Activated CD4-positive, alpha-beta memory T cell treated with anti-CD3 and anti-CD28 coated beads for 36 hours (primary cell): ENCODE measurements at regions of chr6 and their contacts with region 1.

Region 1: DNA sequence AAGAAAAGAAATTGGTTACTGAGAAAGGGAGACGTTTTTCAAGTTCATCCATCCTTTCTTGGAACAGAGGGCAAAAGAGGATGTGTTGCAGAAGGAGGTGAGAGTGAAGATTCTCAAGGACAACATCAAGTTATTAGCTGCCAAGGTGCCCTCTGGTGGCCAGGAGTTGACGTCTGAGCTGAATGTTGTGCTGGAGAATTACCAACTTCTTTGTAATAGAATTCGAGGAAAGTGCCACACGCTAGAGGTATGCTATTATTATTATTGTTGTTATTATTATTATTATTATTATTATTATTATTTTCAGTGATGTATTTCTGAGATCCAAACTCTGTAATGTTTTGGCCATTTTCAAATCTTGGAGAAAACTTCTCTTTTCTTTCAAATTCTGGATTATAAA is 197.0 kb downstream of the UTRN start:
- DNase-seq: peak; percentile 83
- H3K4me3 Mint-ChIP-seq: no peak overlapping the region
- H3K27ac Mint-ChIP-seq: no peak overlapping the region
- H3K4me1 Mint-ChIP-seq: peaks cover 10% of the 10 kb centered on the region
- H3K27me3 Mint-ChIP-seq: no peaks in the 10 kb centered on the region

Region 2: DNA sequence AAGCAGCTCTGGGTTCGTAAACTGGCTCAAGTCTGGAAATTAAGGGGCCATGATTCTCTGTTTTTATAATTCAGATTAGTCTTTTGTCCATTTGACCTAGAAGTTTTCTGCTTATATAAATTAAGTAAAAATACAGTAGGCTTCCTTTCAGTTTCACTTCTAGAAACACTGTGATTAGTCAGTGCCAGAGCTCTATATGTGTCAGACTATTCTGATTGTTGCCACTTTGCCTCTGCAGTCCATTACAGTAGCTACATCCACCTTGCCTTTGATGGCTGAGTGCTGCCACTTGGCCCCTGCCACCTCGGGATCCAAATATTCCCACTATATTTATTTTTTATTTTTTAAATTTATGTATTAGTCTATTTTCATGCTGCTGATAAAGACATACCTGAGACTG is 609.9 kb before region 1 on chr6:
- CTCF ChIA-PET with region 1: no interaction called
- POLR2A ChIA-PET with region 1: no interaction called
- intact Hi-C with region 1: no loop called
- DNase-seq: no peak
- H3K4me3 Mint-ChIP-seq: no peak overlapping the region
- H3K27ac Mint-ChIP-seq: no peak overlapping the region
- H3K4me1 Mint-ChIP-seq: peaks cover 11% of the 10 kb centered on the region
- H3K27me3 Mint-ChIP-seq: no peaks in the 10 kb centered on the region

Region 3: GRCh38 chr6:144262470-144263369 is 219.4 kb before region 1 on chr6:
- CTCF ChIA-PET with region 1: interaction called, 15 read pairs
- POLR2A ChIA-PET with region 1: no interaction called
- intact Hi-C with region 1: loop called (anchors 2 kb)
- DNase-seq: peak; percentile 32
- H3K4me3 Mint-ChIP-seq: no peak overlapping the region
- H3K27ac Mint-ChIP-seq: no peak overlapping the region
- H3K4me1 Mint-ChIP-seq: no peaks in the 10 kb centered on the region
- H3K27me3 Mint-ChIP-seq: no peaks in the 10 kb centered on the region

Region 4: GRCh38 chr6:144460327-144461095 is 21.6 kb before region 1 on chr6:
- CTCF ChIA-PET with region 1: interaction called, 15 read pairs
- POLR2A ChIA-PET with region 1: no interaction called
- intact Hi-C with region 1: no loop called
- DNase-seq: peak; percentile 17
- H3K4me3 Mint-ChIP-seq: peak overlapping the region; percentile 14
- H3K27ac Mint-ChIP-seq: peak overlapping the region; percentile 61
- H3K4me1 Mint-ChIP-seq: peaks cover 21% of the 10 kb centered on the region
- H3K27me3 Mint-ChIP-seq: no peaks in the 10 kb centered on the region

Region 5: GRCh38 chr6:144469144-144469575 is 13.0 kb before region 1 on chr6:
- CTCF ChIA-PET with region 1: interaction called, 25 read pairs
- POLR2A ChIA-PET with region 1: no interaction called
- intact Hi-C with region 1: no loop called
- DNase-seq: peak; percentile 46
- H3K4me3 Mint-ChIP-seq: peak overlapping the region; percentile 59
- H3K27ac Mint-ChIP-seq: peak overlapping the region; percentile 49
- H3K4me1 Mint-ChIP-seq: peaks cover 31% of the 10 kb centered on the region
- H3K27me3 Mint-ChIP-seq: no peaks in the 10 kb centered on the region